ENCODE measurements at regions of chr5 and their contacts with region 1.

Region 1: DNA sequence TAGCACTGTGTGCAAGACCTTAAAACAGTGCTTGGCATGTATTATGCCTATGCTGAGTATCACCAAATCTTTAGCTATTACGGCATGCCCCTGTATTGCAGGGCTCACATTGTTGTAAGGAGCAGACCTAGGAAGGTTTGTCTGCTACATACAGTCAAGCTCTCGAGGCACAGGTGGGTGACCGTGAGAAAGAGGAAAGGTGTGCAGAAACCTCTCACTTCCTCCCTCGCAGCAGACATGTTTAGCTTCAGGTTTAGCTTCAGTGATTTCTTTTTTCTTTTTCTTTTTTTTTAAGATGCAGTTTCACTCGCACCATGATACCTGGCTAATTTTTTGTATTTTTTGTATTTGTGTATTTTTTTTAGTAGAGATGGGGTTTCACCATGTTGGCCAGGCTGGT is 275.8 kb upstream of the RIOK2 start:
- DNase-seq: no peak
- H3K4me3 ChIP-seq: no peak overlapping the region
- H3K27ac ChIP-seq: no peak overlapping the region
- H3K4me1 ChIP-seq: no peaks in the 10 kb centered on the region
- H3K27me3 ChIP-seq: no peaks in the 10 kb centered on the region
- CTCF ChIP-seq: no peak
- EP300 ChIP-seq: no peak
- POLR2A ChIP-seq: no peak

Region 2: DNA sequence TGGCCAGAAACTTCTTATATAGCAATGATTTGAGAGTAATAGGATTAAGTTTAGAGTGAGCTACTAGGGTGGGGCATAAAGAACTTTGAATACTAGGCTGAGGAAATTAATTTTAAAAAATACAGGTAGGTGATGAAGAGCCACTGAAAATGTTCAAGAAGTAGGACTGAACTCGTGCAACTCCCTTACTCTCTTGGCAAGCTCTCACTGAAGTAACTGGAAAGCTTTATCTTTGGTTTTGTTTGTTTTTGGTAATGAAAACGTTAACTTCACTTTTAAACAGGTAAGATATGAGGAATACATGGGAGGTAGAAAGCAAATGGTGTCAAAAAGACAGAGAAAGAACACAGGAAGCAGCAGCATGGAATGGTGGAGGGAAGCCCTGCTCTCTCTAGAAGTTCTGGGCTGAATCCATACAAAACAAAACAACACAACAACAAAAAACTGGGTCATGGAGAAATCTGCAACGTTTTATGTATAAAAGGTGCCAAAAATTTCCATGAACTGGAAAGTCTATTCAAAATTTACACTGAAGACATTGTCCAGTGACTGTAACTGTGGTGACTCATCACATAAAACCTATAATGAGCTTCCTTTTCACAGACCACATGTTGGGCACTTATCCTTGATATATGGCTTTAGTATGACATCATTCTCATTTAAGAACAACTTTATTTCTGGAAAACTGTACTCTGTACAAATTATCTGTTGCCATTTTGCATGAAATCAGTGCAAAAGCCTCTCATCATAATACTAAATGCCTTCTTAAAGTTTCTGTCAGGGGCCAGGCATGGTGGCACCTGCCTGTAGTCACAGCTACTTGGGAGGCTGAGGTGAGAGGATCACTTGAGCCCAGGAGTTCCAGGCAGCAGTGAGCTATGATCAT is 1561.2 kb after region 1 on chr5:
- in situ Hi-C with region 1: no loop called
- intact Hi-C with region 1: loop called (anchors 10 kb)
- DNase-seq: no peak
- H3K4me3 ChIP-seq: peak overlapping the region in 1 of 4 donors; percentile 24
- H3K27ac ChIP-seq: peak overlapping the region; percentile 75 to 86 (median 84)
- H3K4me1 ChIP-seq: peaks cover 8 to 60% (median 19%) of the 10 kb centered on the region in 4 donors
- H3K27me3 ChIP-seq: no peaks in the 10 kb centered on the region
- CTCF ChIP-seq: no peak
- EP300 ChIP-seq: peak; percentile 20
- POLR2A ChIP-seq: no peak

Measured in transverse colon (tissue), 4 donors.